Activated CD4-positive, alpha-beta T cell treated with anti-CD3 and anti-CD28 coated beads for 36 hours (primary cell): ENCODE measurements at regions of chr17 and their contacts with region 1.

Region 1: DNA sequence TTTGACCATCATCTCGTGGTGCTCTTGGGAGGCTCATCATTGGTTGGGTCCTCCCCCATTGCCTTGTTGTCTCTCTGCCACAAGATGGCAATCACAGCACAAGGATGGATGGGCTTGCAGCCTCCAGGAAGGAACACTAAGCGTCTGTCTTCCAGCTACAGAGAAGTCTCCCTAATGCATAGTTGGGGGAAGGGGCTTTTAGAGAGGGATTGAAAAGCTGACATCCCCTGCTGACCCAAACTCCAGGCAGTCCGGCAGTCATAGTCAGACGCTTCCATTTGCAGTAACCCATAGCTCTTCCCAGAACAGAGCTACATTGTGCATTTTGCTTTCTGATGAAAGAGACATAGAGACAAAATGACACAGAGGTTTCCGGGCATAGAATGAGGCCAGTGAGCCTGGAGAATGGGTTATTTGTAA is 111.4 kb downstream of the UTP18 start:
- DNase-seq: peak; percentile 56
- ATAC-seq: peak; percentile 81
- H3K4me3 Mint-ChIP-seq: no peak overlapping the region
- H3K27ac Mint-ChIP-seq: no peak overlapping the region
- H3K4me1 Mint-ChIP-seq: peaks cover 10% of the 10 kb centered on the region
- H3K27me3 Mint-ChIP-seq: no peaks in the 10 kb centered on the region

Region 2: GRCh38 chr17:50783193-50783660 is 588.5 kb before region 1 on chr17:
- CTCF ChIA-PET with region 1: no interaction called
- POLR2A ChIA-PET with region 1: no interaction called
- intact Hi-C with region 1: no loop called
- DNase-seq: peak; percentile 90
- ATAC-seq: peak; percentile 89
- H3K4me3 Mint-ChIP-seq: no peak overlapping the region
- H3K27ac Mint-ChIP-seq: no peak overlapping the region
- H3K4me1 Mint-ChIP-seq: peaks cover 22% of the 10 kb centered on the region
- H3K27me3 Mint-ChIP-seq: peaks cover 11% of the 10 kb centered on the region

Region 3: DNA sequence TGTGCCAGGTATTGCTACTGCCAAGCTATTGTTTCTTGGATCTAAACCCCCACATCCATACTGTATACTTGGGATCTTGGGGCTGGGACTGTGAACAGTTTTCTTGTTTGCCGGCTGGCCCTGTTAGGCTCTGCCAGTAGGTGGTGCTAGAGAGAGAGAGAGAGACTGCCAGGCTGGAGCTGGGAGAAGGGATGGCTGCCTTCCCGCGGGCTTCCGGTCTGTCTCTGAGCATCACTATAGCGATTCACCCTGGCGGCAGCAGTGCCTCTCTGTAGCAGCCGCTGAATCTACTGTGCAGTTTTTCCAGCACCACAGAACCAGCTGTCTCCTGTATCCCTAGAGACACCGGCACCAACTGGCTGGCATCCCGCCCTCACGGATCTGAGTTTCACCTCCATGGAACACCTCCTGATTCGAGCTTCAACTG is 89.8 kb after region 1 on chr17:
- CTCF ChIA-PET with region 1: interaction called, 5 read pairs
- POLR2A ChIA-PET with region 1: no interaction called
- intact Hi-C with region 1: loop called in 1 of 2 experiments (anchors 2 kb)
- DNase-seq: peak; percentile 74
- ATAC-seq: peak; percentile 74
- H3K4me3 Mint-ChIP-seq: no peak overlapping the region
- H3K27ac Mint-ChIP-seq: no peak overlapping the region
- H3K4me1 Mint-ChIP-seq: peaks cover 3% of the 10 kb centered on the region
- H3K27me3 Mint-ChIP-seq: peaks cover 4% of the 10 kb centered on the region

Region 4: GRCh38 chr17:51540151-51540550 is 168.4 kb after region 1 on chr17:
- CTCF ChIA-PET with region 1: no interaction called
- POLR2A ChIA-PET with region 1: no interaction called
- intact Hi-C with region 1: loop called (anchors 1 to 10 kb)
- DNase-seq: peak; percentile 28
- ATAC-seq: peak; percentile 19
- H3K4me3 Mint-ChIP-seq: no peak overlapping the region
- H3K27ac Mint-ChIP-seq: no peak overlapping the region
- H3K4me1 Mint-ChIP-seq: peaks cover 6% of the 10 kb centered on the region
- H3K27me3 Mint-ChIP-seq: no peaks in the 10 kb centered on the region

Region 5: GRCh38 chr17:51640108-51640622 is 268.4 kb after region 1 on chr17:
- CTCF ChIA-PET with region 1: interaction called, 9 read pairs
- POLR2A ChIA-PET with region 1: no interaction called
- intact Hi-C with region 1: loop called (anchors 1 to 2 kb)
- DNase-seq: peak; percentile 39
- ATAC-seq: no peak
- H3K4me3 Mint-ChIP-seq: no peak overlapping the region
- H3K27ac Mint-ChIP-seq: no peak overlapping the region
- H3K4me1 Mint-ChIP-seq: no peaks in the 10 kb centered on the region
- H3K27me3 Mint-ChIP-seq: peaks cover 16% of the 10 kb centered on the region

Region 6: GRCh38 chr17:51734462-51734861 is 362.7 kb after region 1 on chr17:
- CTCF ChIA-PET with region 1: interaction called, 8 read pairs
- POLR2A ChIA-PET with region 1: no interaction called
- intact Hi-C with region 1: loop called in 1 of 2 experiments (anchors 5 kb)
- DNase-seq: peak; percentile 48
- ATAC-seq: no peak
- H3K4me3 Mint-ChIP-seq: no peak overlapping the region
- H3K27ac Mint-ChIP-seq: no peak overlapping the region
- H3K4me1 Mint-ChIP-seq: no peaks in the 10 kb centered on the region
- H3K27me3 Mint-ChIP-seq: peaks cover 17% of the 10 kb centered on the region

Region 7: DNA sequence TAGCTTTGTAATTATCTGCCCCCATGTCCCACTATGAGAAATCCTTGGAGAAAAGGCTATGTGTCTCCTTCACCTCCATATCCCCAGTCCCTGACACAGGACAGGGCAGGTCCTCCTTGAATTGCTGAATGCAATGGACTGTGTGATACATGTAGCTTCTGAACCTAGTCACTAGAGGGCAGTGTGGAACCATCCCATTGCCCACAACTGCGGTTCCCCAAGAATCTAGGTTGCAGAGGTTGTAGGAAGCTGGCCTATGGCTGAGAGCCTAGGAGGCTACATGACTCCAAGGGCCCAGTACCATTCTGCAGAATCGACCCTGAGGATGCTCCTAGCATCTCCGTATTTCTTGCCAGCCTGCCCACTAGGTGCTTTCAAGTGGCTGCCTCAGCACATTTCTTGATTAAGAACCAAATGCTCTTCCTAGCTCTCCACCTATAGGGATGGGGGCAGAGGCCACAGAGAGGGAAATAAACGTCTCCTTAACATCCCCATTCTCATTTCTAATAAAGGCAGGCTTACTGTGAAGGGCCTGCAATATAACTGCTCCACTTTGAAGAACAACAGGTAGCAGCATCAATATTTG is 392.7 kb after region 1 on chr17:
- CTCF ChIA-PET with region 1: no interaction called
- POLR2A ChIA-PET with region 1: no interaction called
- intact Hi-C with region 1: loop called in 1 of 2 experiments (anchors 1 kb)
- DNase-seq: peak; percentile 66
- ATAC-seq: peak; percentile 89
- H3K4me3 Mint-ChIP-seq: no peak overlapping the region
- H3K27ac Mint-ChIP-seq: no peak overlapping the region
- H3K4me1 Mint-ChIP-seq: no peaks in the 10 kb centered on the region
- H3K27me3 Mint-ChIP-seq: peaks cover 19% of the 10 kb centered on the region

Region 8: DNA sequence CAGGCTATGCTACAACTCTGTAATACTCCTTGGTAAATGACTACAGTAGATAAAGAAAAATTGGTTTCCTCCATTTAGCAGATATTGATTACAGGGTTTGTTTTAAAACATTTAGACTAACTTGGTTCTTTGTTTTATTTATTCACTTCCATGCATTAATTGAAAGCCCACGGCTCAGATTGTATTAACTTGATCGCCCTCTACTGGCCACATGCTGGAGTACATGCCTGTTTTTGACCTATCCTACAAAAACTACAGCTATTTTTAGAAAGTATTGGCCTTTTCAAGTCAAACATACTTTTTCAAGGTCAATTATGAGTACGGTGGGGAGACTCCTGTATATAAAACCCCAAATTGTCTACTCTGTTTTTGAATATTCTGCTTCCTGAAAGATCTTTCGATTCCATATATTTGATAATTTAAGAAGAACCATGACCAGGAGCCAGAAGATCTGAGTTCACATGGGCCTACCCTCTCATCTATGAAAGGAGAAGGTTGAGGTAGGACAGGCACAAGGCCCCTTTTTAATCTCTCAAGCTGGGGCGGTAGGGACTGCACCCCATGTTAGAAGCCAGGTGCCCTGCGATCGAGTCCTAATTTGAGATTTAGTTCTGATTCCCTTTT is 735.0 kb after region 1 on chr17:
- CTCF ChIA-PET with region 1: no interaction called
- POLR2A ChIA-PET with region 1: no interaction called
- intact Hi-C with region 1: loop called (anchors 2 to 5 kb)
- DNase-seq: peak; percentile 67
- ATAC-seq: no peak
- H3K4me3 Mint-ChIP-seq: no peak overlapping the region
- H3K27ac Mint-ChIP-seq: no peak overlapping the region
- H3K4me1 Mint-ChIP-seq: no peaks in the 10 kb centered on the region
- H3K27me3 Mint-ChIP-seq: peaks cover 11% of the 10 kb centered on the region